ENCODE measurements at regions of chr13 and their contacts with region 1.

Region 1: DNA sequence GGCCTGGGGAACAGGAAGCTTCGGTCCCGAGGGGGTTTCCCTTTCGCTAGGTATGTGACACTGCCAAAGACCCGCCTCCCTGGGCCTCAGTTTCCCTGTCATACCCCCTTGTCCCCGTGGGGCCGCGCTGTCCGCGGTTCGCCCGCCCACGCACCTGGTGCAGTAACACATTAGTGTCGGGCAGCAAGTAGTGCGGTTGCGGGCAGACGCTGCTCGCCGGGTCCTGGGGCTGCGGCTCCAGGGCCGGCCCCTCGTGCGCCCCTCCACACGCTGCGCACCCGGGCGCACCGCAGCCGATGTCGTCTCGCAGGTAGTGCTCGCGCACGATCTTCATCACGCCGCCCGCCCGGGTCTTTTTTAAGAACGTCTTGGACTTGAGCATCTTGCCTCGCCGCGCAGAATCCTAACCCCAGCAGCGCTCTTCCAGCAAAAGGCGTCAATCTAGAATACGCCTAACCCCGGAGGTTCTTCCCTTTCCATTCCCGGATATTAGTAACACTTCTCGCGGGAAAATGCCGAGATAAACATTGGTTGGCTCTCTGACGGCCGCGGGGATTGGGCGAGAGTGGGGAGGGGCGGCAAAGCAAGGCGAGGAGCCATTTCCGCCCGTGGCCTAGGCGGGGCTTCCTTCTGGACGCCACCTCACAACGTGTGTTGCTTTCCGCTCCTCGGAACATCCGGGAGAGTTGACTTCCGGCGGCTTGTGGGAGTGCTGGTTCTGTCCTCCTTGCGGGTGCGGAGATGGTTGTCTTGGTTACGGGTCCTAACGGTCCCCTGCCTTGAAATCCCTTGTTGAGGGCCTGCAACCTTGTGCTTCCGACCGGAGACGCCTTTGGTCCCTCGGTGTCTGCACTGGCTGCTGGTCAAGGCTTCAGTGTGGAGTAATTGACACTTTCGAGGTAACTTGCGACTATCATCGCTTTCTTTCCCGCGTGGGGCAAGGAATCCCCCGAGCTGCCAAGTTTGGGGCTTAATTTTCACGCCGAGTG is at the starts of genes DIS3 and PIBF1:
- DNase-seq: peak; percentile 99
- H3K4me3 Mint-ChIP-seq: peak within 1 kb of the TSS; percentile 97
- H3K27ac Mint-ChIP-seq: peak within 1 kb of the TSS; percentile 98
- H3K4me1 Mint-ChIP-seq: peaks cover 43% of the 10 kb centered on the region
- H3K27me3 Mint-ChIP-seq: no peaks in the 10 kb centered on the region
- total RNA-seq, gene DIS3: 52.1 and 55.6 TPM in 2 replicates
- total RNA-seq, gene PIBF1: 25.0 and 33.7 TPM in 2 replicates

Region 2: GRCh38 chr13:72643311-72643989 is 138.3 kb before region 1 on chr13:
- intact Hi-C with region 1: loop called (anchors 10 kb)
- DNase-seq: peak; percentile 85
- H3K4me3 Mint-ChIP-seq: no peak overlapping the region
- H3K27ac Mint-ChIP-seq: no peak overlapping the region
- H3K4me1 Mint-ChIP-seq: no peaks in the 10 kb centered on the region
- H3K27me3 Mint-ChIP-seq: peaks cover 13% of the 10 kb centered on the region

Region 3: DNA sequence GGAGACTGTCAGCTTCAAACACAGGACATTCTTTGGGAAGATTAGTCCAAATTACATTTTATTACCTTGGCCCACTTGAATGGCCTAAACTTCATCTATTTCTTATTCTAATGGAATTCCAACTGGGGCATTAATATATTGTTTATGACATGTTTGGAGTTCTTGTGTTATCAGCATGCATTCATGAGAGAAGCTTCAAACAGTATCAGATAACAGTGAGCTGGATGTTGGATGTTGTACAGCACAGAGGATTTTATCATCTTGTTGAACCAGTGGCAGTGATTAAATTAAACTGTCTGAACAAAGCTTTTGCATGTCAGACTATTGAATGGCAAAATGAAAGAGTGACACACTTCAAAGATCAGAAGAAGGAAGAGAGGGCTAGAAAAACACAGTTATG is 104.3 kb before region 1 on chr13:
- intact Hi-C with region 1: no loop called
- DNase-seq: no peak
- H3K4me3 Mint-ChIP-seq: no peak overlapping the region
- H3K27ac Mint-ChIP-seq: no peak overlapping the region
- H3K4me1 Mint-ChIP-seq: no peaks in the 10 kb centered on the region
- H3K27me3 Mint-ChIP-seq: no peaks in the 10 kb centered on the region

Region 4: GRCh38 chr13:72727417-72728289 is 54.1 kb before region 1 on chr13 and contains the starts of genes BORA and MZT1:
- intact Hi-C with region 1: loop called (anchors 1 kb)
- DNase-seq: peak; percentile 99
- H3K4me3 Mint-ChIP-seq: peak within 1 kb of the TSS; percentile 96
- H3K27ac Mint-ChIP-seq: peak within 1 kb of the TSS; percentile 94
- H3K4me1 Mint-ChIP-seq: peaks cover 48% of the 10 kb centered on the region
- H3K27me3 Mint-ChIP-seq: no peaks in the 10 kb centered on the region
- total RNA-seq, gene BORA: 17.3 and 18.1 TPM in 2 replicates
- total RNA-seq, gene MZT1: 24.1 and 24.4 TPM in 2 replicates

Measured in activated CD4-positive, alpha-beta T cell treated with anti-CD3 and anti-CD28 coated beads, Interleukin-2, amount 10 ng/mL, durations not matched to agents 24 days and 14 days (primary cell).